ENCODE measurements at regions of chr1 and their contacts with region 1.

Region 1: GRCh38 chr1:35598895-35599294 is 25.8 kb downstream of the TFAP2E start:
- DNase-seq: no peak
- H3K4me3 ChIP-seq: no peak overlapping the region
- H3K27ac ChIP-seq: no peak overlapping the region
- H3K4me1 ChIP-seq: no peaks in the 10 kb centered on the region
- H3K27me3 ChIP-seq: no peaks in the 10 kb centered on the region
- CTCF ChIP-seq: no peak
- EP300 ChIP-seq: no peak
- POLR2A ChIP-seq: no peak
- RAD21 ChIP-seq: no peak

Region 2: GRCh38 chr1:35585281-35585680 is 13.6 kb before region 1 on chr1:
- CTCF ChIA-PET with region 1: interaction called, 3 read pairs
- POLR2A ChIA-PET with region 1: interaction called, 11 read pairs
- DNase-seq: no peak
- H3K4me3 ChIP-seq: no peak overlapping the region
- H3K27ac ChIP-seq: no peak overlapping the region
- H3K4me1 ChIP-seq: peaks cover 0 to 8% (median 3%) of the 10 kb centered on the region in 4 experiments; a peak in 3 of 7 replicates
- H3K27me3 ChIP-seq: peaks cover 0 to 2% (median 0%) of the 10 kb centered on the region in 4 experiments; a peak in 1 of 7 replicates
- CTCF ChIP-seq: no peak
- EP300 ChIP-seq: no peak
- POLR2A ChIP-seq: no peak
- RAD21 ChIP-seq: no peak

Region 3: DNA sequence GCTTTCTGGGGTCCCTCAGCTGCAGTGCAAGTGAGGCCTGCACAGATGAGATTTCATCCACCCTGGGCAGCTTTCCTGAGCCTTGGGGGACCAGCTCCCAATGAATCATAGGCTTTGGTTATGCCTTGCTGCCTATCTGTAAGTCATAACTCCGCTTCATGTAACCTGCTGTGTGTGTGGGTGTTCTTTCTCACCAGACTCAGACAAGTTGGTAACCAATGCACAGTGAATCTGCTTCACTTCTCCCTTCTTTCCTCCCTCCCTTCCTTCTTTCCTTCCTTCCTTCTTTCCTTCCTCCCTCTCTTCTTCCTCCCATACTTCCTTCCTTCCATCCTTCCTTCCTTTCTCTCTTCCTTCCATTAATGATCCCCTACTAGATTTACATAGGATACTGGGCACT is 76.9 kb after region 1 on chr1:
- CTCF ChIA-PET with region 1: no interaction called
- POLR2A ChIA-PET with region 1: no interaction called
- DNase-seq: no peak
- H3K4me3 ChIP-seq: no peak overlapping the region
- H3K27ac ChIP-seq: no peak overlapping the region
- H3K4me1 ChIP-seq: no peaks in the 10 kb centered on the region
- H3K27me3 ChIP-seq: no peaks in the 10 kb centered on the region
- CTCF ChIP-seq: no peak
- EP300 ChIP-seq: no peak
- POLR2A ChIP-seq: no peak
- RAD21 ChIP-seq: no peak

Measured in H1 (cell line).